ENCODE measurements at regions of chr10 and their contacts with region 1.

Region 1: GRCh38 chr10:15433850-15434537 is 62.9 kb upstream of the FAM171A1 start:
- DNase-seq: peak in 1 of 2 donors; percentile 59
- H3K4me3 ChIP-seq: peak overlapping the region; percentile 22 to 27
- H3K27ac ChIP-seq: peak overlapping the region in 1 of 2 donors; percentile 32
- H3K4me1 ChIP-seq: no peaks in the 10 kb centered on the region
- H3K27me3 ChIP-seq: no peaks in the 10 kb centered on the region
- CTCF ChIP-seq: peak; percentile 70 to 75 (median 74)
- POLR2A ChIP-seq: no peak

Region 2: DNA sequence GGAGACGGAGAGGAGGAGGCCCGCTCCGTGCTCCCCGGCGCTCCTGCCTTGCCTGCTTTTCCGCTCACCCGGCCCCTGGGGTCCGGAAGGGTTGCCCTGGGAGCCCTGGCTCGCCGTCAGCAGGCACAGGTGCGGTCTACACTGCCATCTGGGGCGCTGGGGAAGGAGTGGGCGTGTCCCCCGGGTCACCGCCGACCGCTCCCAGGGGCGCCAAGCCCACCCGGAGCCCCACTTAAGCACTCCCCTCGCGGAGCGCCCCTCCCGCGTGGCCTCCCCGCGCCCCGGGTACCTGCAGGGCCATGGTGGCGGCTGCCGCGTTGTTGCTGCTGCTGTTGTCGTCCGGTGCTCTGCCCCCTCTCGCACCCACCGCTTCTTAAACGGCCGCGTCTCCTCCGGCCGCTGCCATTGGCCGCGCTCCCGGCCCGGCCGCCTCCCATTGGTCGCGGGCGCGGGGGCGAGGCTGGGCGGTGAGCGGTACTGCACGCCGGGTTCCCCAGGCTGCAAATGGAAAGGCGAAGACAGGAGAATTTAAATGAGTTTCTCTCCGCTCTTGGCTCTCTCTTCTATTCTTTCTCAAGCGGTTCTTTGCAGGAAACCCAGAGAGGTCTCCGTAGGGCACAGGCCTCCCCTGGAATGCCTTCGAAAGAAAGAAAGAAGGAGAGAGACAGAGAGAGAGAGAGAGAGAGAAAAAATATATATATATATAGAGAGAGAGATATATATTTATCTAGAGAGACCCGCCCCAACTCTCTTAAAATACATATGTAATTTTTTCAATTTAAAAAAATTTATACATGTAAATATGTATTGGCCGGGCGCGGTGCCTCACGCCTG is 345.3 kb before region 1 on chr10 and contains the start of gene ACBD7:
- intact Hi-C with region 1: no loop called
- DNase-seq: peak; percentile 61 to 71
- H3K4me3 ChIP-seq: peak within 1 kb of the TSS; percentile 38 to 47
- H3K27ac ChIP-seq: no peak within 1 kb of the TSS
- H3K4me1 ChIP-seq: no peaks in the 10 kb centered on the region
- H3K27me3 ChIP-seq: no peaks in the 10 kb centered on the region
- CTCF ChIP-seq: peak; percentile 27 to 74 (median 61)
- POLR2A ChIP-seq: peak in 1 of 2 donors; percentile 10
- total RNA-seq, gene ACBD7: 0.37 to 12.2 TPM in 2 of 4 donors, not detected in the others

Region 3: DNA sequence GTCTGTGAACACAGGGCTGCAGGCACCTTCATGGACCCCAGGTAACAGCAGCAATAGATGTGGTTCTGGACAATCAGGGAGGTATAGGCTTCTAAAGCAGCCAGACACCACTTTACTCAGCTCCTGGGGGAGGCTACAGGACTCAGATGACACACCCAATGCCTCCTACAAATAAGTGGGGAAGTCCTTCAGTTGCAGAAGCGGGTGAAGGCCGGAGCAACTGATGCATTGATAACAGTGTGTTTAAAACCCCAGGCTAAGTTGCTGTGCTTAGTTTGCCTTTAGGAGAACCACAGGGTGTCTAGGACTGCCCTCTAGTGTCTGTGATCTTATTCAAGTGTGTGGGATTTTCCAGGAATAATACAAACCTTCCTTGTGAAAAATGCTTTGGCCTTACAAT is 291.6 kb after region 1 on chr10:
- intact Hi-C with region 1: loop called (anchors 5 kb)
- DNase-seq: peak in 1 of 2 donors; percentile 31
- H3K4me3 ChIP-seq: no peak overlapping the region
- H3K27ac ChIP-seq: no peak overlapping the region
- H3K4me1 ChIP-seq: no peaks in the 10 kb centered on the region
- H3K27me3 ChIP-seq: no peaks in the 10 kb centered on the region
- CTCF ChIP-seq: peak; percentile 49 to 69 (median 65)
- POLR2A ChIP-seq: no peak

Region 4: DNA sequence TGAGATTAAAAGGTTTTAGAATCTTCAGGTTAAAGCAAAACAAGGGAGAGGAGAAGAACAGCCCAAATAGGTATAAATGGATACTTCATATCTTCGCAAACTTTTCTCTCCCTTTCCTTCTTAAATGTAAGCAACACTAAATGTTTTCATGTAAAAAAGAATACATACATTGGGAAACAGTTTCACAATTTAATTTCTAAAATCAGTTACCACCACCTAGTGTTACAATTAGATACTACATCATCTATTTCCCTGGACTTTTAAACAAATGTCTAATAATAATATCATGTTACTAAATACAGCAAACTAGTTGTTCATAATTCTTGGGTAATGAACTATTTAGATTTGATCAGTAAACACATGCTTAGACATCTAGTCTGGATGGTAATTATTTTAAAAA is 390.5 kb after region 1 on chr10:
- intact Hi-C with region 1: loop called (anchors 10 kb)
- DNase-seq: no peak
- H3K4me3 ChIP-seq: no peak overlapping the region
- H3K27ac ChIP-seq: no peak overlapping the region
- H3K4me1 ChIP-seq: no peaks in the 10 kb centered on the region
- H3K27me3 ChIP-seq: no peaks in the 10 kb centered on the region
- CTCF ChIP-seq: peak; percentile 38 to 56 (median 50)
- POLR2A ChIP-seq: no peak

Region 5: GRCh38 chr10:15943426-15943825 is 509.4 kb after region 1 on chr10:
- intact Hi-C with region 1: no loop called
- DNase-seq: no peak
- H3K4me3 ChIP-seq: no peak overlapping the region
- H3K27ac ChIP-seq: no peak overlapping the region
- H3K4me1 ChIP-seq: no peaks in the 10 kb centered on the region
- H3K27me3 ChIP-seq: no peaks in the 10 kb centered on the region
- CTCF ChIP-seq: no peak
- POLR2A ChIP-seq: no peak

Measured in uterus (tissue), 4 donors.